GM10248 (cell line): ENCODE measurements at regions of chr5 and their contacts with region 1.

Region 1: GRCh38 chr5:44332285-44332971 is 56.8 kb downstream of the FGF10 start:
- DNase-seq: peak; percentile 13
- CTCF ChIP-seq: peak; percentile 45

Region 2: GRCh38 chr5:43729846-43730478 is 602.5 kb before region 1 on chr5:
- CTCF ChIA-PET with region 1: interaction called, 16 read pairs
- POLR2A ChIA-PET with region 1: no interaction called
- DNase-seq: no peak
- CTCF ChIP-seq: peak; percentile 55

Region 3: DNA sequence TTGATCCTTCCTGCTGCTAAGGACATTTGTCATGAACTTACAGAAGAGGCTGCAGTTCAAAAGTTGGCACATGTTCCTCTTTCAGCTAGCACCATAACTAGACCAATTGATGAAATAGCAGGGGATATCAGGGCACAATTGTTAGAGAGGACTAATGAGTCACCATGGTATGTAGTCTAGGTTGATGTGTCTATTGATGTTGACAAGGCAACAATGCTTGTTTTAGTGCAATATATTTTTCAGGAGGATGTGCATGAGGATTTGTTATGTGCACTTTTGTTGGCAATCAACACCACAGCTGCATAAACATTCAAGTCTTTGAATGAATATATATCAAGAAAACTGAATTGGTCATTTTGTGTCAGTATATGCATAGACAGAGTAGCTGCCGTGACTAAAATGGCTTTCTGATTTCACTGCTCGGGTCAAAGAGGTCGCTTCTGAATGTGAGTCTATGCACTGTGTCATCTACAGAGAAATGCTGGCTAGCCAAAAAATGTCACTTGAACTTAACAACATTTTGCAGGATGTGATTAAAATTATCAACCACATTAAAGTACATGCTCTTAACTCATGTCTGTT is 11.2 kb before region 1 on chr5:
- CTCF ChIA-PET with region 1: interaction called, 17 read pairs
- POLR2A ChIA-PET with region 1: no interaction called
- DNase-seq: no peak
- CTCF ChIP-seq: no peak

Region 4: GRCh38 chr5:44345871-44346270 is 13.4 kb after region 1 on chr5:
- CTCF ChIA-PET with region 1: interaction called, 33 read pairs
- POLR2A ChIA-PET with region 1: no interaction called
- DNase-seq: no peak
- CTCF ChIP-seq: no peak

Region 5: GRCh38 chr5:44536650-44537260 is 204.3 kb after region 1 on chr5:
- CTCF ChIA-PET with region 1: no interaction called
- POLR2A ChIA-PET with region 1: no interaction called
- DNase-seq: peak; percentile 22
- CTCF ChIP-seq: peak; percentile 63